Right lobe of liver (tissue), 6 donors: ENCODE measurements at regions of chr10 and their contacts with region 1.

Region 1: GRCh38 chr10:103069453-103070331 is 123.4 kb downstream of the NT5C2 start:
- DNase-seq: peak; percentile 65 to 74 (median 70)
- ATAC-seq: peak; percentile 89 to 96 (median 94)
- H3K4me3 ChIP-seq: no peak overlapping the region
- H3K27ac ChIP-seq: no peak overlapping the region
- H3K4me1 ChIP-seq: no peaks in the 10 kb centered on the region
- H3K27me3 ChIP-seq: no peaks in the 10 kb centered on the region
- CTCF ChIP-seq: peak; percentile 63 to 79 (median 76)
- POLR2A ChIP-seq: no peak

Region 2: DNA sequence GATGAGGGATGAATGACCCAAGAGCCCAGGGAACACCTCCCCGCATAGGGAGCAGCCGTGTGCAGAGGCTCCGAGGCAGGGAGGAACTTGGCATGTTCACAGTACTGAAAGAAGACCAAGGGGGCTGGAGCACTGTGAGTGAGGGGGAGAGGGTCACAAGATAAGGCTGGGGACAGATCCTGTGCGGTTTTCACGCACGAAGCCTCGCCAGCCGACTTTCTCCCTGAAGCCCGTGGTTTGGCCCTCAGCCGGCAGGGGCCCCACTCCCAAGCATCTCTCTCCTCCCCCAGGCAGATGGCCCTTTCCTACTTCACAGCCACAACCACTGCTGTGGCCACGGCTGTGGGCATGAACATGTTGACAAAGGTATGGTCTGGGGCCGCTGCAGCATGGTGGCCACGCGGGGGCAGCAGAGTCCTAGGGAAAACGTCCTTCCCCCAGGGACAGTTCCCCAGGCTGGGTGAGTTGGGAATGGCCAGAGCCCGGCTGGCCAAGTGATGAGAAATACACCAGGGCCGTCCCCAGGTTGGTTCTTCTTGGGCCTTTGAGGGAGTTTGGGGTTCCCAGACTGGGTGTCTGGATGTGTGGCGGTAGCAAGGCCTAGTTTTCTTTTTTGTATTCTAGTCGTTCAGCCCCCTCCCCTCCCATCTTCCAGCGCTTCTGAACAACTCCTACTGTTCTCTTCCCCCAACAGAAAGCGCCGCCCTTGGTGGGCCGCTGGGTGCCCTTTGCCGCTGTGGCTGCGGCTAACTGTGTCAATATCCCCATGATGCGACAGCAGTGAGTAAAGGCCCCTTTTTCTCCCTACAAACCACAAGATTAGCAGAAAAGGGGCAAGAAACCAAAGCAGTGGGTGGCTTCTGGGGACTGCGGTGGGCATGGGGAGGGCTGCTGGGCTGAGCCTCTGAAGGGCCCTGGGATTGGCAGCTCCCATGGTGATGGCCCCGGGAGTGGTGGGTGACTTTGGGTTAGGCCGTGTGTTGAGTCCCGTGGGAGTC is 340.4 kb before region 1 on chr10:
- intact Hi-C with region 1: loop called in 1 of 2 experiments (anchors 10 kb)
- DNase-seq: peak; percentile 85 to 87 (median 87)
- ATAC-seq: peak; percentile 94 to 95 (median 94)
- H3K4me3 ChIP-seq: no peak overlapping the region
- H3K27ac ChIP-seq: no peak overlapping the region
- H3K4me1 ChIP-seq: peaks cover 0 to 9% (median 0%) of the 10 kb centered on the region in 4 donors
- H3K27me3 ChIP-seq: no peaks in the 10 kb centered on the region
- CTCF ChIP-seq: peak; percentile 91 to 96 (median 92)
- POLR2A ChIP-seq: no peak

Region 3: DNA sequence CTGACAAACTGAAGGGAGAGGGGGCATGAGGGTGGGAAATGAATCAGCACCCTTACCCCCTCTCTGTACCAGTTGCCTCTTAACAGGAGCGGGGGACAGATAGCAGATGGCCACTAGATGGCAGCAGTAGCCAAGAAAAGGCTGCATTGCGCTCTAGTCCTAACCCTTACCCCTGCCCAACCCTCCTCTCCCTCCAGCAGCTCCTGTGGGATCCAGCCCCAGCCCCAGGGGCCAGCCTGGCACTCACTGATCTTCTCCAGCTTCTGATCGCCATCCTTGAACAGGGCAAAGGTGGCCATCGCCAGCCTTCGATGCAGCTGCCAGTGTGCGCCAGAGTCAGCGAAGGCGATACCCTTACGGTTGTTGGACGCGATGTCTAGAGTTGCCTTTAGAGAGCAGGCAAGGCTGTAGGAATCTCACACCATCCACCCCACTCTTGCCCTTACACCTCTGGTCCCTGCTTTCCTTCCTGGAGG is 234.6 kb before region 1 on chr10:
- intact Hi-C with region 1: loop called in 1 of 2 experiments (anchors 10 kb)
- DNase-seq: peak; percentile 64 to 77 (median 68)
- ATAC-seq: peak; percentile 81 to 90 (median 86)
- H3K4me3 ChIP-seq: no peak overlapping the region
- H3K27ac ChIP-seq: no peak overlapping the region
- H3K4me1 ChIP-seq: peaks cover 0 to 16% (median 3%) of the 10 kb centered on the region in 4 donors
- H3K27me3 ChIP-seq: no peaks in the 10 kb centered on the region
- CTCF ChIP-seq: peak; percentile 84 to 95 (median 89)
- POLR2A ChIP-seq: no peak

Region 4: GRCh38 chr10:102904346-102904745 is 165.3 kb before region 1 on chr10:
- intact Hi-C with region 1: no loop called
- DNase-seq: no peak
- ATAC-seq: no peak
- H3K4me3 ChIP-seq: no peak overlapping the region
- H3K27ac ChIP-seq: no peak overlapping the region
- H3K4me1 ChIP-seq: no peaks in the 10 kb centered on the region
- H3K27me3 ChIP-seq: no peaks in the 10 kb centered on the region
- CTCF ChIP-seq: no peak
- POLR2A ChIP-seq: no peak

Region 5: GRCh38 chr10:102917962-102918816 is 151.5 kb before region 1 on chr10 and contains the start of gene CNNM2:
- intact Hi-C with region 1: loop called (anchors 5 kb)
- DNase-seq: peak; percentile 100
- ATAC-seq: peak; percentile 92 to 96 (median 94)
- H3K4me3 ChIP-seq: peak within 1 kb of the TSS; percentile 88 to 95 (median 90)
- H3K27ac ChIP-seq: peak within 1 kb of the TSS; percentile 83 to 90 (median 85)
- H3K4me1 ChIP-seq: peaks cover 0 to 30% (median 5%) of the 10 kb centered on the region in 4 donors
- H3K27me3 ChIP-seq: no peaks in the 10 kb centered on the region
- CTCF ChIP-seq: no peak
- POLR2A ChIP-seq: peak; percentile 50
- total RNA-seq, gene CNNM2: 5.2 to 7.6 (median 6.5) TPM

Region 6: DNA sequence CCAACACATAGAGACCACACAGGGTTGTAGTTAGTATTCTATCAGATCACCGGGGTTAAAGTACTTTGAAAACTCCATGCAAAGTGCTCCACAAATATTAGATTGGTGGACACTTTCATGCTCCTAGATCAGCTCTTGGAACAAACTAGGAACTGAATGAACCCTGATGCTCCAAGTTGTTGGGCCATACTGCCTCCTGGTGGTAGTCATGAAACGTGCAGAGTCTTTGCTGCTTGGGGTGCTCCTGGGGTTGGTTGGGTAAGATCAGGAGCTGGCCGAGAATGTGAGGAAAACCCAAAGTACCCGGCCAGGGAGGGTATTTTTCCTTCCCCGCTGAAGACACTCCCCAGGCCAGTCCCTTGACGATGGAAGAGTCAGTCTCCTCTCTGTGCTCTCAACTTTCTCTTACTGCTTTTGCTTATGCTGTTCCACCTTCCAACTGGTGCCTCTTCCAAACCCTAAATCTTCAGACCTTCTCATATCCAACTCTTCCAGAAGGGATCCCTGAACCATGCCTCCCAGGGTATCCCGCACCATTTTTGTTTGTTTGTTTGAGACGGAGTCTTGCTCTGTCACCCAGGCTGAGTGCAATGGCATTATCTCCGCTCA is 175.1 kb after region 1 on chr10:
- intact Hi-C with region 1: loop called in 1 of 2 experiments (anchors 10 kb)
- DNase-seq: peak; percentile 47 to 67 (median 64)
- ATAC-seq: peak; percentile 96 to 98 (median 97)
- H3K4me3 ChIP-seq: no peak overlapping the region
- H3K27ac ChIP-seq: no peak overlapping the region
- H3K4me1 ChIP-seq: peaks cover 0 to 4% (median 0%) of the 10 kb centered on the region in 4 donors
- H3K27me3 ChIP-seq: no peaks in the 10 kb centered on the region
- CTCF ChIP-seq: peak; percentile 85 to 90 (median 87)
- POLR2A ChIP-seq: no peak